ENCODE measurements at regions of chr18 and their contacts with region 1.

Region 1: GRCh38 chr18:11149441-11150270 is at the start of gene PIEZO2:
- DNase-seq: peak; percentile 66
- ATAC-seq: peak; percentile 76
- total RNA-seq, gene PIEZO2: 1.1 TPM

Region 2: GRCh38 chr18:10560450-10561045 is 589.1 kb before region 1 on chr18:
- intact Hi-C with region 1: loop called (anchors 5 kb)
- DNase-seq: peak; percentile 64
- ATAC-seq: peak; percentile 75

Region 3: DNA sequence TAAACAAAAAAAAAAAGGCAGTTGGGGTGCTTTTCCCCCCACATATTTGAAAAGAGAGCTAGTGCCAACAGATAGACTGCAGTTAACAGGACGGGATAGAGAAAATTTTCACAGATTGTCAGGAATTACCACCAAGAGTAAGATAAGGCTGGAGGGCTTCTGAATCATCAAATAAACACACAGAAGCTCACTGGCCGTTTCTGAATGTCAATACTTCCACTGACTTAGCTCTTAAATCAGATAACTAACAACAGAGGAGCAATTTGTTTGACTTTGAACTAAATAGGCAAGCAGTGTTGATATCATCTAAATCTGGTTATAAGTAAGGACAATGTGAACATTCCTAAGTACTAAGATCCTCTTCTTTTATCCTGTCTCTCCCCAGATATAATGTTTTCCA is 35.0 kb before region 1 on chr18:
- intact Hi-C with region 1: no loop called
- DNase-seq: no peak
- ATAC-seq: no peak